Activated naive CD4-positive, alpha-beta T cell treated with anti-CD3 and anti-CD28 coated beads for 36 hours (primary cell): ENCODE measurements at regions of chrX and their contacts with region 1.

Region 1: DNA sequence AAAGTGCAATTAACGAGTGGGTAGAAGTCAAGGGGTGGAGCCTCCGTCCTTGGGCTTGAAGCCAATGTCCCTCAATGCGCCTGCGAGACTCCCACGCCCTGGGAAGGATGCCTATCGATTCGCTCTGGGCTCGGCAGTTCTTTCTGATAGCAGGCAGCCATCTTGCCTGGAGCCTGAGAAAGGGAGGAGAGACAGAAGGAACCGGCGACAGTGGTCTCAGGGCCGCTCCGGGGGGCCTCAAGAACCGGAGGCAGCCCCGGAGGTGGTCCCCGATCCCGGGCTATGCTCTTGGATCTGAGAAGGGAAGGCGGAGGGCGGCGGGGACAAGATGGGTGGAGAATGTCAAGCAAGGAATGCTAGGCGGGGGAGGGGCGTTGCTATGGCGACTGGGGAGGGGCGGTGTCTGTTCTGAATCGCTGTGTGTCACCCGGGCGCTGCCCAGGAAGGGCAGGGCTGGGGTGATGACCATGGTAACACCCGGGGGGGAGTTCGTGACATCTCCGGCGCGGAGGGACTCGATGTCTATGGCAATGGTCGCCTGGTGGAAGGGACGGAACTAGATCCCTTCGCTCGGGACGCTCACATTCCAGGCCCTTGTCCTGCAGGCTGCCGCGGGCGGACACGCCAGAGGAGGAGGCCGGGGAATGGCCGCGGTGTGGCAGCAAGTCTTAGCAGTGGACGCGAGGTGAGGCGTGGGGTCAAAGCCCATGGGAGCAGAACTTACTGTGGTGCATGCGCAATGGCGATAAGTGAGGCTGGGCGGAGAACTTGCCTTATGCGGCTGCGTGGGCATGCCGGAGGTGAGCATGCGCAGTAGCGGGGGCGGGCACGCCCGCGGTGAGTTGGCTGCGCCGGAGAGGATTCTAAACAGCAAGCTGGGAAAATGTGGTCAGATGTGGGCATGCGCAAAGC is at the start of gene WDR13:
- DNase-seq: peak; percentile 94
- H3K4me3 Mint-ChIP-seq: peak within 1 kb of the TSS; percentile 97
- H3K27ac Mint-ChIP-seq: peak within 1 kb of the TSS; percentile 97
- H3K4me1 Mint-ChIP-seq: peaks cover 7% of the 10 kb centered on the region
- H3K27me3 Mint-ChIP-seq: no peaks in the 10 kb centered on the region
- total RNA-seq, gene WDR13: 37.0 to 40.1 TPM

Region 2: DNA sequence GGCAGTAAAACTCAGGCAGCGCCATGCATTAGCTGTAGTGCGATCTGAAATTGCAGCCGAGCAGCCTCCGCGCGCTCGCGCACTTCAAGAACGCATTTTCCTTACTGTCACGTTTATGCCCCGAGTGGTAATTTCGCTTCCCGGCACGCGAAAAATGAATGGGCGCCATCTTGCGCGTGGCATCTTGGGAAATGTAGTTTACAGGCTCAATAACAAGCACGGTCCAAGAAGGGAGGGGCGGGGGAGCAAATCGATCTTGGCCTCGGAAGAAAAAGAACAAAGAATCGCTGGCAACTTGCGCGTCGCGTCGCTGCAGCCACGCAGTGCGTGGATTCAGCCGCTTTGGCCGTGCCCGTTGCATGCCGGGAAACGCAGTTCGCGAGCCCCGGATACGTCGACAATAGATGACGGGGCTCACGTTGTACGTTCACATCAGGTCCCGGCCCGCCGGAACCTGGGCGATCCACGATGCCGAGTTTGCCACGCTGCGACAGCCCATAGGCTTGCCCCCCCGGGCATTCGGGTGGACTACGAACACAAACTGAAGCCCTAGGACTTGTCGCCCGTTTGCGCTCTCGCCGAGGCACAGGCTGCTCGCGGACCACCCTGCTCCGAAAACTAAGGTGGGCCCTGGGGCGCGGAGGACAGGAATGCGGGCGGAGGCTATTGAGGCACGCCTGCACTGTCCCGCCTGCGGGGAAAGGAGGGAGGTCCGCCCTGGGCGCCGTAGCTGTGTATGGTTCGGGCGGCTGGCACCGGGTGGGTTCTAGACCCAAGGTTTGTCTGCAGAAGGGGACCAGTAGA is 121.6 kb before region 1 on chrX and contains the start of gene FTSJ1:
- CTCF ChIA-PET with region 1: no interaction called
- intact Hi-C with region 1: loop called (anchors 1 kb)
- DNase-seq: peak; percentile 86
- H3K4me3 Mint-ChIP-seq: peak within 1 kb of the TSS; percentile 76
- H3K27ac Mint-ChIP-seq: peak within 1 kb of the TSS; percentile 90
- H3K4me1 Mint-ChIP-seq: peaks cover 32% of the 10 kb centered on the region
- H3K27me3 Mint-ChIP-seq: no peaks in the 10 kb centered on the region
- total RNA-seq, gene FTSJ1: 66.2 to 66.8 TPM

Region 3: GRCh38 chrX:48521353-48522243 is 76.0 kb before region 1 on chrX and contains the start of gene EBP:
- CTCF ChIA-PET with region 1: no interaction called
- intact Hi-C with region 1: loop called (anchors 1 kb)
- DNase-seq: peak; percentile 98
- H3K4me3 Mint-ChIP-seq: peak within 1 kb of the TSS; percentile 90
- H3K27ac Mint-ChIP-seq: peak within 1 kb of the TSS; percentile 98
- H3K4me1 Mint-ChIP-seq: peaks cover 25% of the 10 kb centered on the region
- H3K27me3 Mint-ChIP-seq: no peaks in the 10 kb centered on the region
- total RNA-seq, gene EBP: 118 to 123 TPM

Region 4: DNA sequence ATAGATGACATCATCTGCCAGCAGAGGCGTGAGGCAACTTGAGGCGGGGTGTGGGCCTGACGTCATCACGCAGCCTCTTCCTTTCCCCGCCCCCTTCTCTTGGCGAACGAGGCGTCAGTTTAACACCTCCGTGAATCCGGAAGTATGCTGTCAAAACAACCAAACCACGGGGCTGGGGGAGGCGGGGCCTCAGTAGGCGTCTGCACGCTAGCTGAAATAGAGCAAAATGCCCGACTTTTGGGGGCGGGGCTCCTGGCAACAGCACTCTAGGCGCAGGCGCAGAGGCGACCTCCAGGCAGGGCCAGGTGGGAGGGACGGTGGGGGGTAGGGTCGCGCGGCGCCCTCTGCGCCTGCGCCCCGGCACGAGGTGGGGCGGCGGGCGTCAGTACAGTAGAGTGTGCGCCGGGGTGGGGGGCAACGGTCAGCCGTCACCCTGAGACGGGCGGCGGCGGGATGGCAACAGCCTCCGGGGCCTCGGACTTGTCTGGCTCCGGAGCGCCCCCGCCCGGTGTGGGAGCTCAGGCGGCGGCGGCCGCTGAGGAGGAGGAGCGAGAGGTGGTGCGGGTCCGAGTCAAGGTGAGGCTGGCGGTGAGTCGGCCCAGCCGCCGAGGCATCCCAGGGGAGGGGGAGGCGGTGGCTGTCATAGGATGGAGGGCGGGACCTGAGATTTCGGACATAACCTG is 58.1 kb before region 1 on chrX and contains the start of gene TBC1D25:
- CTCF ChIA-PET with region 1: no interaction called
- intact Hi-C with region 1: loop called (anchors 2 kb)
- DNase-seq: peak; percentile 98
- H3K4me3 Mint-ChIP-seq: peak within 1 kb of the TSS; percentile 88
- H3K27ac Mint-ChIP-seq: peak within 1 kb of the TSS; percentile 93
- H3K4me1 Mint-ChIP-seq: peaks cover 12% of the 10 kb centered on the region
- H3K27me3 Mint-ChIP-seq: no peaks in the 10 kb centered on the region
- total RNA-seq, gene TBC1D25: 10.6 to 11.1 TPM

Region 5: DNA sequence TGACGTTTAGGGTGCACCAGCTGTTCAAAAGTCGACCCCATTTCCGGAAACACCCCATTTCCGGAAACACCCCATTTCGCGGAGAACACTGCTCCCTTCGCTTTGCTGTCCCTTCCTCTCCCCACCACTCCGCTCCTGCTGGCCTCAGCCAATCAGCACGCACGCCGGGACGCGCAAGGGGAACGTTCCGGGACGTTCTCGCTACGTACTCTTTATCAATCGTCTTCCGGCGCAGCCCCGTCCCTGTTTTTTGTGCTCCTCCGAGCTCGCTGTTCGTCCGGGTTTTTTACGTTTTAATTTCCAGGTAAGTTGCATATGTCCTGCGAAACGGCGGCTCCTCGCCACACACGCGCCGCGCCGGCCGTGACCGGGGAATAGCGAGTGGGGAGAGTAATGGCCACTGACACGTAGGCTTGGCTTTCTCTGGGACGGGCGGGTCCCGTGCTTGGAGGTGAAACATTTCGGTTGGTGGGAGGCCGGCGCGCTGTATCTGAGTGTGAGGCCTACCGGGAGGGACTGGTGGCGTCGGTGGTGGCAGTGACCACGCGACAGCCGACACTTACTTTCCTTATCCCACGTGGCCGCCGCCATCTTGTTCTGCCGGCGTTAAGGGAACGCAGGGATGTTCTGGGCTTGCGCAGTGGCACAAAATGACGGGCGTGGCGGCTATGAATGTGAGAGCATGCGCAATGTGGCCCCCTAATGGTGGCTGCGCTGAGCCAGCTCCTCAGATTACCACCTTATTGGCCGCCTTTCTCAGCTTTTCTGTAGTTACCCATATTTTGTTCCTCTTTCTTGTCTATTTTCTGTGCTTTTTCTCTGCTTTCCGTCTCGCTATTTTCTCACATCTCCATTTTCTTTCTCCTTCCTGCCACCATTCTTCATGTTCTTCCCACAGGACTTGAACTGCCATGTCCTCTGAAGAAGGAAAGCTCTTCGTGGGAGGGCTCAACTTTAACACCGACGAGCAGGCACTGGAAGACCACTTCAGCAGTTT is 23.0 kb before region 1 on chrX and contains the start of gene RBM3:
- CTCF ChIA-PET with region 1: no interaction called
- intact Hi-C with region 1: loop called (anchors 1 kb)
- DNase-seq: peak; percentile 95
- H3K4me3 Mint-ChIP-seq: peak within 1 kb of the TSS; percentile 96
- H3K27ac Mint-ChIP-seq: peak within 1 kb of the TSS; percentile 99
- H3K4me1 Mint-ChIP-seq: peaks cover 32% of the 10 kb centered on the region
- H3K27me3 Mint-ChIP-seq: no peaks in the 10 kb centered on the region
- total RNA-seq, gene RBM3: 139 to 143 TPM

Region 6: GRCh38 chrX:48676106-48676892 is 78.7 kb after region 1 on chrX:
- CTCF ChIA-PET with region 1: no interaction called
- intact Hi-C with region 1: loop called (anchors 10 kb)
- DNase-seq: peak; percentile 90
- H3K4me3 Mint-ChIP-seq: peak overlapping the region; percentile 90
- H3K27ac Mint-ChIP-seq: peak overlapping the region; percentile 91
- H3K4me1 Mint-ChIP-seq: peaks cover 25% of the 10 kb centered on the region
- H3K27me3 Mint-ChIP-seq: no peaks in the 10 kb centered on the region

Region 7: DNA sequence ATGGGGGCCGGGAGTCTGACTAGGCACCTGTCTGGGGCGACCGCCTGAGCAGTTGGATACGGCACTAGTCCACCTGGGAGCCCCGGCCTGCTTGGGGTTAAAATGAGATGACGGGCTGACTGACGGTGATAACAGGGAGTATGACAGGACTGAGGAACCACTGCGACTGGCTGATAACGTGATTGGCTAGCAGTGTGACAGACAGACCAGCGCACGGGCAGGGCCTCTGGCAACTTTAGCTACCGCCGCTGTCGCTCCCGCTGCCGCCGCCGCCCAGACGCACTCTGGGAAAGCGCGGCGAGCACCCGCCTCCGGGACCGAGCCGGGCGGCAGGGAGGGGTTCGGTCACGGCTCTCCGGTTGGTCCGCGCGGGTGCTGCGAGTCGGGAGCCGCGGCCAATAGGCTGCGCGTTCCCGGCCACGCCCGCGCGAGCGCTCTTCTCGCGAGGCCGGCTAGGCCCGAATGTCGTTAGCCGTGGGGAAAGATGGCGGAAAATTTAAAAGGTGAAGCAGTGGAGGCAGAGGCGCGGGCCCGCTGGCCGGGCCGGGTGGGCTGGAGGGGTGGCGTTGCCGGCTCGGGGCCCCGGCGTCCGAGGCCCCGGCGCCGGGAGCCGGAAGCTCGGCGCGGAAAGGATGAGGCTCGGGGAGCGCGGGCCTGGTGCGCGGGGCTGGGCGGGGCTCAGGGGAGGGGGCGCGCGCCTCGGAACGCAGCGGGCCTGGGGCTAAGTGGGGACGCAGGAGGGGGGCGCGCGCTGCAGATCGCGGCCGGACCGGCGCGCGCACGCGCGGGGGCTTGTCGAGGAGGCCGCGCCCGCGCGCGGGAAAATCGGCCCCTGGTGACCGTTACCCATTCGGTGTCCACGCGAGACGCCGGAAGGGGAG is 98.9 kb after region 1 on chrX and contains the start of gene SUV39H1:
- CTCF ChIA-PET with region 1: no interaction called
- intact Hi-C with region 1: loop called (anchors 1 kb)
- DNase-seq: peak; percentile 87
- H3K4me3 Mint-ChIP-seq: peak within 1 kb of the TSS; percentile 89
- H3K27ac Mint-ChIP-seq: peak within 1 kb of the TSS; percentile 91
- H3K4me1 Mint-ChIP-seq: peaks cover 36% of the 10 kb centered on the region
- H3K27me3 Mint-ChIP-seq: no peaks in the 10 kb centered on the region
- total RNA-seq, gene SUV39H1: 31.5 to 31.9 TPM